Caco-2 (cell line): ENCODE measurements at regions of chr5 and their contacts with region 1.

Region 1: GRCh38 chr5:141557681-141558136 is 61.1 kb downstream of the DIAPH1 start:
- DNase-seq: peak; percentile 66 to 76
- H3K4me3 ChIP-seq: no peak overlapping the region
- H3K4me3 Mint-ChIP-seq: no peak overlapping the region
- H3K27ac Mint-ChIP-seq: peak overlapping the region; percentile 81
- H3K4me1 ChIP-seq: no peaks in the 10 kb centered on the region
- H3K4me1 Mint-ChIP-seq: peaks cover 16% of the 10 kb centered on the region
- H3K27me3 ChIP-seq: no peaks in the 10 kb centered on the region
- H3K27me3 Mint-ChIP-seq: no peaks in the 10 kb centered on the region
- CTCF ChIP-seq: peak; percentile 67 to 81

Region 2: DNA sequence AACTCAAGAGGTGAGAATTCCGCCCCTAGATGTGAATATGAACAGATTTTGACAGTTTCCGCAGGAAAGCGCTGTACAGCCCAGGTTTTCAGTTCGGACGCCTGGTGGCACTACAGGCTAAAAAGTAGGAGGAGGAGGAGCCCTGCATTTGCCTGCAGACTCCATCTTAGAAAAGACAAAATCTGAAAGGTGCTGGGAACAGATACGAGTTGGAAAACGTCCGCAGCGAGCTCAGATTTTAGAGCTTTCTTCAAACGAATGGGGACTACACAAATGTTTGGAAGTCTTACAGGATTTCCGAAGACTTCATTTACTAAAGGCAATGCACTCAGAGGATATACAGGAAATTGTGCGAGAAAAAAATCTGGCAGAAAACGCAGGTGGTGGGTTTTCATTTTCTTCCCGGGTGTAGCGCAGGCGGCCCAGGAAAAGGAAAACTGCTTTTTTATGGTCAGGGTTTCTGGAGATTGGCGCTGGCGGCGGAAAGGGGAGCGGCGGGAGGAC is 473.2 kb before region 1 on chr5:
- CTCF ChIA-PET with region 1: no interaction called
- POLR2A ChIA-PET with region 1: no interaction called
- intact Hi-C with region 1: loop called (anchors 2 kb)
- DNase-seq: peak; percentile 38 to 51
- H3K4me3 ChIP-seq: peak overlapping the region; percentile 27
- H3K4me3 Mint-ChIP-seq: peak overlapping the region; percentile 75
- H3K27ac Mint-ChIP-seq: peak overlapping the region; percentile 63
- H3K4me1 ChIP-seq: no peaks in the 10 kb centered on the region
- H3K4me1 Mint-ChIP-seq: no peaks in the 10 kb centered on the region
- H3K27me3 ChIP-seq: no peaks in the 10 kb centered on the region
- H3K27me3 Mint-ChIP-seq: no peaks in the 10 kb centered on the region
- CTCF ChIP-seq: peak in 1 of 2 experiments; percentile 20

Region 3: DNA sequence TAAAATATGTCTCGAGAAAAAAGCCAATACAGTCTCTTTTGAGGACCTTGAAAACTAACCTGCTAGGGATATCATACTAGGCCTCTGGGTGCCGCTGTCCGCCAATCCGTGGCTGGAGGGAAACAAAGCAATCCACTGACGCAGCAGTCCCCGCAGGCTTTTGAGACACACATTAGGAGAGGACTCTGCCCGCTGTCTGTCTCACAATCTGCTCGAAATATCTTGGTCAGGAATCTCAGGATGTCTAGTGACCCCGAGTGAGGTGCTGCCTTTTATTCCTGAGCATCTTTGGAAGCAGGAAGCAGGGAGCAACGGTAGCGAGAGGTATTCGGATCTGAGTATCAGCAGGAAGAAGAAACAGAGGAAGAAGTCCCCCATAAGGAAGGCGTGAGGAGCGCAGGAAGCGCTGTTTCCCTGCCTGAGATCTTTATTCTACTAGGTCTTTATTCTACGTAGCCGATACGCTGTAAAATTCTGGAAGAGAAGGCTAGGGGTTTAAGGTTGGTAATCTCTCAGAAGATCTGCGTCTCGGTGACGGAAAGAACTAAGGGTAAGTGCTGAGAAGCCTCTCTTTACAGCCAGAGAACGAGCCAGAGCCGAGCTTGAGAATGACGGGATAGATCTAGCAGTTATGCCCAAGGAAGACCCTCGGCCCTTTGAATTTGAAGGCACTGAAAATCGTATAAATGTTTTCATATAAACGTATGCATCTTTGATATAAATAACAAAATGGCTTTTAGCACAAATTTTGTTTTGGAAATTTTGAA is 231.4 kb before region 1 on chr5:
- CTCF ChIA-PET with region 1: interaction called, 7 read pairs
- POLR2A ChIA-PET with region 1: no interaction called
- intact Hi-C with region 1: loop called (anchors 1 kb)
- DNase-seq: peak; percentile 82 to 85
- H3K4me3 ChIP-seq: peak overlapping the region; percentile 39
- H3K4me3 Mint-ChIP-seq: peak overlapping the region; percentile 93
- H3K27ac Mint-ChIP-seq: peak overlapping the region; percentile 88
- H3K4me1 ChIP-seq: no peaks in the 10 kb centered on the region
- H3K4me1 Mint-ChIP-seq: no peaks in the 10 kb centered on the region
- H3K27me3 ChIP-seq: no peaks in the 10 kb centered on the region
- H3K27me3 Mint-ChIP-seq: no peaks in the 10 kb centered on the region
- CTCF ChIP-seq: peak; percentile 80 to 85

Region 4: DNA sequence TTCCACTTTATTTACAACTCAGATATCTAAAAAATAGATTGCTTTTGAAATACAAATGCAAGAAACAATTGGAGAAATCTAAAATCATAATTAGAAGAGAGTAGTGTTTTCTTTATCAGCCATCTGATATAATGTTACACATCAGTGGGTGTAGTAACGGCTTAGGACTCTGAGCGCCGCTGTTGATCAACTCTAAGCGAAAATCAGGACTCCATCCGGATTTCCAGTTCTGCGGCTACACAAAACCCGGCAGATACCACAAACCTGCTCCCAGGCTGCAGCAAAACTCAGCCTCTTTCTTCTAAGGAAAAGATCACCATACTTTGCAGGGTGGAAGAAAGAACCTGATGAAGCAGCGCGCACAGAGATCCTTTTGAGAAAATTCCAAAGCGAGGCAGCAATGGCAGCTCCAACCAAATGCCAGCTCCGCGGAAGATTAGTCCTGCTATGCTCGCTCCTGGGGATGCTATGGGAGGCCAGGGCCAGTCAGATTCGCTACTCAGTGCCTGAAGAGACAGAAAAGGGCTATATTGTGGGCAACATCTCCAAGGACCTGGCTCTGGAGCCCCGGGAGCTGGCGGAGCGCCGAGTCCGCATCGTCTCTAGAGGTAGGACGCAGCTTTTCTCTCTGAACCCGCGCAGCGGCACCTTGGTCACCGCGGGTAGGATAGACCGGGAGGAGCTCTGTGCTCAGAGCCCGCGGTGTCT is 155.0 kb before region 1 on chr5 and contains the start of gene PCDHGA9:
- CTCF ChIA-PET with region 1: interaction called, 3 read pairs
- POLR2A ChIA-PET with region 1: no interaction called
- intact Hi-C with region 1: loop called (anchors 1 kb)
- DNase-seq: no peak
- H3K4me3 ChIP-seq: no peak within 1 kb of the TSS
- H3K4me3 Mint-ChIP-seq: no peak within 1 kb of the TSS
- H3K27ac Mint-ChIP-seq: no peak within 1 kb of the TSS
- H3K4me1 ChIP-seq: no peaks in the 10 kb centered on the region
- H3K4me1 Mint-ChIP-seq: no peaks in the 10 kb centered on the region
- H3K27me3 ChIP-seq: no peaks in the 10 kb centered on the region
- H3K27me3 Mint-ChIP-seq: no peaks in the 10 kb centered on the region
- CTCF ChIP-seq: no peak
- total RNA-seq, gene PCDHGA9: 2.8 and 4.4 TPM in 2 replicates

Region 5: DNA sequence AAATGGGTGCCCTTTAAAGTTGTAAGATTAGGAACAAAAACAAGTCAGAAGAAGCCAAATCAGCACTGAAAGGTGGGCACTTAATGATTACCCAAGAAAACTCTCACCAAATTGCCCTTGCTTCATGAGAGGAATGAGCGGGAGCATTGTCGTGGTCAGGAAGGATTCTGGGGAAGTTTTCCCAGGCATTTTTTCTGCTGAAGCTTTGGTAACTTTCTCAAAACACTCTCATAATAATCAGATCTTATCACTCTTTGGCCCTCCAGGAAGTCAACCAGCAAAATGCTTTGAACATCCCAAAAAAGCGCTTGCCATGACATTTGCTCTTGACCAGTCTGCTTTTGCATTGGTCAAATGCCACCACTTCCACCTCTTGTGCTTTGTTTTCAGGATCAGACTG is 92.4 kb before region 1 on chr5:
- CTCF ChIA-PET with region 1: no interaction called
- POLR2A ChIA-PET with region 1: no interaction called
- intact Hi-C with region 1: no loop called
- DNase-seq: no peak
- H3K4me3 ChIP-seq: no peak overlapping the region
- H3K4me3 Mint-ChIP-seq: no peak overlapping the region
- H3K27ac Mint-ChIP-seq: no peak overlapping the region
- H3K4me1 ChIP-seq: no peaks in the 10 kb centered on the region
- H3K4me1 Mint-ChIP-seq: no peaks in the 10 kb centered on the region
- H3K27me3 ChIP-seq: no peaks in the 10 kb centered on the region
- H3K27me3 Mint-ChIP-seq: no peaks in the 10 kb centered on the region
- CTCF ChIP-seq: no peak

Region 6: GRCh38 chr5:141492168-141492885 is 65.4 kb before region 1 on chr5:
- CTCF ChIA-PET with region 1: no interaction called
- POLR2A ChIA-PET with region 1: no interaction called
- intact Hi-C with region 1: no loop called
- DNase-seq: no peak
- H3K4me3 ChIP-seq: no peak overlapping the region
- H3K4me3 Mint-ChIP-seq: no peak overlapping the region
- H3K27ac Mint-ChIP-seq: no peak overlapping the region
- H3K4me1 ChIP-seq: no peaks in the 10 kb centered on the region
- H3K4me1 Mint-ChIP-seq: peaks cover 7% of the 10 kb centered on the region
- H3K27me3 ChIP-seq: no peaks in the 10 kb centered on the region
- H3K27me3 Mint-ChIP-seq: peaks cover 6% of the 10 kb centered on the region
- CTCF ChIP-seq: no peak

Region 7: DNA sequence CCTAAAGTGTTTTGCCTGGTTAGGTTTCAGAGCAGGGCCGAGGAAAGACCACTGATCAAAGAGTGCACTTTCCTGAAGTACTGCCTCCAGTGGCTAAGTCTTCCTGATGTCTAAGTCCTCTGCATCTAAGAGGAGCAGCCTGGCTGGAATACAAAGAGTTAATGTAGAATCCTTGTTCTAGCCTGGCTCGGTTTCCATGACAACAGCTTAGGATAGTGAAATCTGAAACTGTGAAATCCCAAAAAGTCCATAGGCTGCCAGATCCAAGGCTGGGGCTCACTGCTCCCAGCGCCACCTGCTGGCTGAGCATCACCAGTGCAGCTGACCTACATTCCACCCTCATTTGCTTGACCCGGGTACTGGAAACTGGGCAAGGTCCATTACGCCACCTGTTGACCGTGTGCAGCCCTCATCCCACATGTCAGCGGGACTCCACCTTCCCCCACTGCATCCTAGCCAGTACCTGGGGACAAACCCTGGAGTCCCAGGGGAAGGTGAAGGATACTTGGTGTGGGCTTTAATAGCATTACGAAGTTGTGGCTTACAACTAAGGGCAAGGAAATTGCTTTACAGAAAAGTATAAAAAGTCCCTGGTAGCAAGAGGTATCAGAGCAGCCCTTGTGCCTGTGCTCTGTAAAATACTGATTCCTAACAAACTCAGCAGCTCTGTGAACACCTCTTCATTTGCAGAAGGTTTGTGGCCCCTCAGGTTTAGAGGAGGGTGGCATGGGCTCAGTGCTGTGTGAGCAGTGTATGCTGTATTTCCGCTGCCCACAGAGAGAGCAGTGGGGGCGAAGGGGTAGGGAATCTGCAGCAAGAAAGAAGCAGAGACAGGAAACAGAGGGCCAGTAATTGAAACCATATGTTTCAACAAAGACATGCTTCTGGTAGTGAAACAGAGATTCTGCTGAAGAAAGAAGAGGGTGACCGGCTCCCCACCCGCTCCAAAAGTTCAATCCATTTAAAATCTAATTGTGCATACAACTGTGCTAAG is 32.8 kb before region 1 on chr5:
- CTCF ChIA-PET with region 1: interaction called, 3 read pairs
- POLR2A ChIA-PET with region 1: no interaction called
- intact Hi-C with region 1: loop called (anchors 1 kb)
- DNase-seq: peak; percentile 82 to 88
- H3K4me3 ChIP-seq: no peak overlapping the region
- H3K4me3 Mint-ChIP-seq: peak overlapping the region; percentile 5
- H3K27ac Mint-ChIP-seq: peak overlapping the region; percentile 40
- H3K4me1 ChIP-seq: peaks cover 29% of the 10 kb centered on the region
- H3K4me1 Mint-ChIP-seq: peaks cover 21% of the 10 kb centered on the region
- H3K27me3 ChIP-seq: no peaks in the 10 kb centered on the region
- H3K27me3 Mint-ChIP-seq: no peaks in the 10 kb centered on the region
- CTCF ChIP-seq: peak; percentile 92 to 93